PC-9 (cell line): ENCODE measurements at regions of chr1 and their contacts with region 1.

Region 1: DNA sequence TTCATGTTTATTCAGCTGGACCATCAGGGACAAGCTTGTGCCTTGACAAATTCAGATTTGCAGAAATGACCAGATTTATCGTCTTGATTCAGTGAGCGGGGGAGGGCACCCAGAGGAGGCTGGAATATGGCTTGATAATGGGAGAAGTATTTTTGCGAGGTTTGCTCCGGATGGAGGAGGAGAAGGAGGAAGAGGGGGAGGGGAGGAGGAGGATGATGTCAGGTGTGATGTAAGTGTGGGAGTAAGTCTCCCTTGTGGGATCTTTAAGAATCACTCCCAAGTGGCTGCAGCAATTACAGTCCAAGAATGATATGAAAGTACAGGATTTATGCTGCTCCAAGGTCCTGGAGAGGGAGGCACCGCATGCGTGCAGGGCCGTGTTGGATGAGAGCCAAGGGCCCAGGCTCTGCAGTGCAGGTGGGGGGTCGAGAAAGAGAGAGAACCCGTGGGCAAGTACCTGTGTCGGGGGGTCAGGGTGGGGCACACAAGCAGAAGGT is 5.6 kb upstream of the ZNF496 start:
- DNase-seq: no peak
- H3K4me3 ChIP-seq: no peak overlapping the region
- H3K27ac ChIP-seq: no peak overlapping the region
- H3K4me1 ChIP-seq: 0 out of 2 replicates have a peak, but pooled peaks cover 4% of the 10 kb centered on the region
- H3K27me3 ChIP-seq: no peaks in the 10 kb centered on the region
- CTCF ChIP-seq: no peak

Region 2: DNA sequence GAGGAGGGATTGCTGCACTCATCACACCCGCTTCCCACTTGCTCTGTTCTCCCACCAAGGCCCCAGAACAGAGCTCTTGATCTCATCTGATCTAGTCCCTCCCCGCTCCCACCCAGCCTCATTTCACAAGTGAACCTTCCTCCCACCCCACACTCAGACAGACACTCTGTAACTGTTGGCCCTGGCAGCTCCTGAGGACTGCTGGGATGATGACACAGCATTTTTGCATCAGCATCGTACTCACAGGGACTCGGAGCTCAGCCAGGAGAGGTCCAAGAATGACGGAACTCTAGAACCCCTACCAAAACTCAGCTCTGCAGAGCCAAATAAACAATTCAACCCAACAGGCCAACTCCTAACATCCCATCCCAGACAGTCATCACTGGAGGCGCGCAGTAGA is 154.3 kb before region 1 on chr1:
- CTCF ChIA-PET with region 1: interaction called, 11 read pairs
- POLR2A ChIA-PET with region 1: no interaction called
- intact Hi-C with region 1: no loop called
- DNase-seq: no peak
- H3K4me3 ChIP-seq: no peak overlapping the region
- H3K27ac ChIP-seq: no peak overlapping the region
- H3K4me1 ChIP-seq: no peaks in the 10 kb centered on the region
- H3K27me3 ChIP-seq: no peaks in the 10 kb centered on the region
- CTCF ChIP-seq: no peak

Region 3: DNA sequence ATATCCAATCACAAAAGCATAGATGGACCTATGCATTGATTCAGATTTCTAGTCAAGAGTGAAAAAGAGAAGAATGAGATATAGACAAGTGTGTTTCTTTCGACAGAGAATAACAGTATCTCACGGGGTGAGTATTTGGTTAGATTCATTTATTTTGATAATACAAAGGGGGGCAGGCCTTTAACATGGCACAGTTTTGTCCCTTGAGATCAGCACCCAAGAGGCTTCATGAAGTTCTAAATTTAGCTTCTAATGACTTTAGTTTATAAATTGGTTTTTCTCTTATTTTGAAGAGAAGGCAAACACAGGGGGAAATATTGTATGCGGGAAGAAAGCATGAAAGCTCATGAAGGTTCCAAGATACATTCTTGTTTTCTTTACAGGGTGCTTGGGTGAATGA is 423.2 kb after region 1 on chr1 and contains the start of gene OR1C1:
- CTCF ChIA-PET with region 1: no interaction called
- POLR2A ChIA-PET with region 1: no interaction called
- intact Hi-C with region 1: no loop called
- DNase-seq: no peak
- H3K4me3 ChIP-seq: no peak within 1 kb of the TSS
- H3K27ac ChIP-seq: no peak within 1 kb of the TSS
- H3K4me1 ChIP-seq: no peaks in the 10 kb centered on the region
- H3K27me3 ChIP-seq: no peaks in the 10 kb centered on the region
- CTCF ChIP-seq: no peak
- total RNA-seq, gene OR1C1: not detected in 2 replicates